Mucosa of descending colon (tissue), 3 donors: ENCODE measurements at regions of chr14 and their contacts with region 1.

Region 1: GRCh38 chr14:39266871-39267591 is 33.3 kb downstream of the MIA2 start:
- DNase-seq: peak; percentile 89 to 92 (median 89)
- ATAC-seq: peak; percentile 96
- H3K4me3 ChIP-seq: peak overlapping the region; percentile 82
- H3K4me1 ChIP-seq: peaks cover 14% of the 10 kb centered on the region
- CTCF ChIP-seq: no peak

Region 2: DNA sequence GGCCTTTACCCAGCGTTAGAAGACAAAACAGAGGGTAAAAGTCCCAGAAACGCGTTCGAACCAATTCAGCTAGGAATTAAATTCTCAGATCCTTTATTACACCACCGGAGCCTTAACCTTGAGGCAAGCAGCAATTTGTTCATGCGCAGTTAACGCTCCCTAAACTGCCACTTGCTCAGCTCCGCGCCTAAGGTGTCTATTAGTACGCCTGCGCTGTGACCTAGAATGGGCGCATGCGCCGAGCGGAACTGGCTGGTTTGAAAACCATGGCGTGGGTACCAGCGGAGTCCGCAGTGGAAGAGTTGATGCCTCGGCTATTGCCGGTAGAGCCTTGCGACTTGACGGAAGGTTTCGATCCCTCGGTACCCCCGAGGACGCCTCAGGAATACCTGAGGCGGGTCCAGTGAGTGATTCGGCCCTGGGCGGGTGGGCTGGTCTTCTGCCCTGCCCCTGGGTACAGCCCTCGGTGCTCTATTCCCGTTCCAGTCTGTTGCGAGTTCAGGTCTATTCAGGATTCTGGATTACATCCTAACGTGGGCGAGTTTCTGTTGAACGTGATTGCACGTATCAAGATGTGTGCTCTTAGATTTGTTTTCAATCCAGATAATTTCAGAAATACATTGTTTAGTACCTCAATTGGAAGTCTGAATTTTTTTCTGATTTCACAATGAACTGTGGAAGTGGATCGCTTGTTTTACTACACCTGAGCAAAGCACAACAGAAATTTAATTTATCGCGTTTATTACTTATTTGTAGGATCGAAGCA is 152.8 kb before region 1 on chr14 and contains the start of gene GEMIN2:
- intact Hi-C with region 1: loop called in 1 of 2 experiments (anchors 10 kb)
- DNase-seq: peak; percentile 94 to 97 (median 95)
- ATAC-seq: peak; percentile 98
- H3K4me3 ChIP-seq: peak within 1 kb of the TSS; percentile 39
- H3K4me1 ChIP-seq: peaks cover 7% of the 10 kb centered on the region
- CTCF ChIP-seq: no peak
- total RNA-seq, gene GEMIN2: 7.9 to 8.2 (median 8.1) TPM